T-cell (primary cell): ENCODE measurements at regions of chr9 and their contacts with region 1.

Region 1: GRCh38 chr9:68999393-69000105 is 14.4 kb downstream of the PRKACG start:
- DNase-seq: peak; percentile 17 to 79 (median 56)
- ATAC-seq: peak; percentile 83 to 94 (median 86)
- H3K4me3 ChIP-seq: no peak overlapping the region
- H3K4me3 Mint-ChIP-seq: no peak overlapping the region
- H3K27ac ChIP-seq: no peak overlapping the region
- H3K27ac Mint-ChIP-seq: peak overlapping the region in 1 of 2 donors; percentile 48
- H3K4me1 ChIP-seq: peaks cover 0 to 6% of the 10 kb centered on the region in 2 experiments
- H3K4me1 Mint-ChIP-seq: peaks cover 22 to 30% (median 30%) of the 10 kb centered on the region in 3 donors
- H3K27me3 ChIP-seq: peaks cover 0 to 3% of the 10 kb centered on the region in 2 experiments
- H3K27me3 Mint-ChIP-seq: peaks cover 0 to 11% of the 10 kb centered on the region in 2 donors

Region 2: DNA sequence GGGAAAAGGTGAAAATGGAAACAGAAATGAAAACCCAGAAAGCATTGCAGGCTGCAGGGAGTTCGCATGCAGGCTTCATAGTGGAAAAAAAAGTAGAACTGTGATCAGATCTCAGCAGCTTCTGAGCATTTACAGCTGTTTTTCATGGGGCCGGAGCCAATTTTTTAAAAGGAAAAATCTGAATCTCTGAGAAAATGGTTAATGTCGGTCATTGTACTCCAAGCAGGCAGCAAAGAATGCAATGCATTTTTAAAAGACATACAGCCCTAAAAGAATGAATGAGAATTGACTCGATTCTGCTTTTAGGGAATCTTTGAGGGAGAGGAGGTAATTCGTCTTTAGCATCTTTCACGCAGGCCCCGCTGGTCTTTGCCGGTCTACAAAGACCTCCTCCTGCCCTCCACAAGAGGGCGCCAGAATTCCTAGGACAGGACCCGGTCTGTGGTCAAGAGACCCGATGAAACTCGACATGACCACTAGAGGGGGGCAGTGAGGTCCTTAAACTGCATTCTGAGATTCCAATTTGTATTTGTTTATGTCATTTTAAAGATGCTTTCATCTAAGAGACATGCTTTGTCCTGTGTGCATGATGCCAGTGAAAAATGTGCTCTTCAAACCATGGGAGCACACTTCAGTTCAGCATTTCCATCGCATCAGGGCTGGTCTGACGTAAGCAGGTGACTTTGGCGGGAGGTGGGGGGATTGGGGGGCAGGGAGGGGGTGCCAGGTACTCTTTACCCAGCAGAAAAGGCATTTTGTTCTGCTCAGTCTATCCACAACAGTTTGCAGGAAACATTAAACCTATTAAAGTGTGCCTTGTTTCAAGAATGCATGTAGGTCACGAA is 415.1 kb before region 1 on chr9:
- CTCF ChIA-PET with region 1: interaction called, 4 to 10 read pairs
- POLR2A ChIA-PET with region 1: no interaction called
- DNase-seq: peak; percentile 56 to 93 (median 77)
- ATAC-seq: peak; percentile 83 to 97 (median 93)
- H3K4me3 ChIP-seq: no peak overlapping the region
- H3K4me3 Mint-ChIP-seq: no peak overlapping the region
- H3K27ac ChIP-seq: no peak overlapping the region
- H3K27ac Mint-ChIP-seq: no peak overlapping the region
- H3K4me1 ChIP-seq: no peaks in the 10 kb centered on the region
- H3K4me1 Mint-ChIP-seq: peaks cover 0 to 5% (median 0%) of the 10 kb centered on the region in 3 donors
- H3K27me3 ChIP-seq: peaks cover 0 to 5% of the 10 kb centered on the region in 2 experiments
- H3K27me3 Mint-ChIP-seq: peaks cover 0 to 17% of the 10 kb centered on the region in 2 donors

Region 3: GRCh38 chr9:68775003-68775730 is 224.4 kb before region 1 on chr9:
- CTCF ChIA-PET with region 1: interaction called in 1 of 2 experiments, 3 read pairs
- POLR2A ChIA-PET with region 1: interaction called in 1 of 2 experiments, 14 read pairs
- DNase-seq: no peak
- ATAC-seq: no peak
- H3K4me3 ChIP-seq: no peak overlapping the region
- H3K4me3 Mint-ChIP-seq: no peak overlapping the region
- H3K27ac ChIP-seq: no peak overlapping the region
- H3K27ac Mint-ChIP-seq: no peak overlapping the region
- H3K4me1 ChIP-seq: peaks cover 3 to 5% of the 10 kb centered on the region in 2 experiments
- H3K4me1 Mint-ChIP-seq: no peaks in the 10 kb centered on the region
- H3K27me3 ChIP-seq: peaks cover 0 to 5% of the 10 kb centered on the region in 2 experiments
- H3K27me3 Mint-ChIP-seq: peaks cover 10 to 14% of the 10 kb centered on the region in 2 donors

Region 4: GRCh38 chr9:69071059-69071458 is 71.5 kb after region 1 on chr9:
- CTCF ChIA-PET with region 1: no interaction called
- POLR2A ChIA-PET with region 1: no interaction called
- DNase-seq: no peak
- ATAC-seq: no peak
- H3K4me3 ChIP-seq: no peak overlapping the region
- H3K4me3 Mint-ChIP-seq: no peak overlapping the region
- H3K27ac ChIP-seq: no peak overlapping the region
- H3K27ac Mint-ChIP-seq: no peak overlapping the region
- H3K4me1 ChIP-seq: no peaks in the 10 kb centered on the region
- H3K4me1 Mint-ChIP-seq: no peaks in the 10 kb centered on the region
- H3K27me3 ChIP-seq: no peaks in the 10 kb centered on the region
- H3K27me3 Mint-ChIP-seq: no peaks in the 10 kb centered on the region

Region 5: DNA sequence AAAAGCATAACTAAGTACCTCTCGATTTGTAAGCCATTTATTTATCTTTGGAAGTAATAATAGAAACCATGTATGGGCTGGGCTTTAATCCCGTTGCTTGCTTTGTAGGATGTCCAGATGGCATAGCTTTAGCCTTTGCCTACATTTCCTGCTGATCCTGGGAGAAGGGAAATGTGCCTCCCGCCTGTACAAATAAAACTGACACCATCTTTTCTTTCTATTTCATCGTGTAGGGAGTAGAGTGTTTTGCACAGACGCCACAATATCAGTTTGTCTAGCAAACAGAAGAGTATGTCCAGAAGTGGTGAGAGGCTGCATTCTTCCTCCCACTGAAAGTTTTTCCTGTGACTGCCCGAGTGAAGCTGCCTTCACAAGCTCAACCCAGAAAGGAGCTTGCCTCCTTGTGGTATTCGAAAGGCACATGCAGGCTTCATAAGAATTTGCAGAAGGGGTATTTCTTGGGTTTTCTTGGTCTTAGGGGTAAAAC is 149.8 kb after region 1 on chr9:
- CTCF ChIA-PET with region 1: no interaction called
- POLR2A ChIA-PET with region 1: no interaction called
- DNase-seq: no peak
- ATAC-seq: no peak
- H3K4me3 ChIP-seq: no peak overlapping the region
- H3K4me3 Mint-ChIP-seq: no peak overlapping the region
- H3K27ac ChIP-seq: no peak overlapping the region
- H3K27ac Mint-ChIP-seq: no peak overlapping the region
- H3K4me1 ChIP-seq: no peaks in the 10 kb centered on the region
- H3K4me1 Mint-ChIP-seq: no peaks in the 10 kb centered on the region
- H3K27me3 ChIP-seq: no peaks in the 10 kb centered on the region
- H3K27me3 Mint-ChIP-seq: no peaks in the 10 kb centered on the region